ENCODE measurements at regions of chr1 and their contacts with region 1.

Region 1: GRCh38 chr1:42173155-42173933 is 8.8 kb upstream of the GUCA2A start:
- DNase-seq: peak; percentile 38 to 84 (median 66)
- ATAC-seq: peak; percentile 92
- H3K4me3 ChIP-seq: no peak overlapping the region
- H3K4me3 Mint-ChIP-seq: no peak overlapping the region
- H3K27ac ChIP-seq: no peak overlapping the region
- H3K27ac Mint-ChIP-seq: no peak overlapping the region
- H3K4me1 ChIP-seq: peaks cover 4% of the 10 kb centered on the region
- H3K4me1 Mint-ChIP-seq: no peaks in the 10 kb centered on the region
- H3K27me3 ChIP-seq: no peaks in the 10 kb centered on the region
- H3K27me3 Mint-ChIP-seq: no peaks in the 10 kb centered on the region
- CTCF ChIP-seq: peak; percentile 97

Region 2: DNA sequence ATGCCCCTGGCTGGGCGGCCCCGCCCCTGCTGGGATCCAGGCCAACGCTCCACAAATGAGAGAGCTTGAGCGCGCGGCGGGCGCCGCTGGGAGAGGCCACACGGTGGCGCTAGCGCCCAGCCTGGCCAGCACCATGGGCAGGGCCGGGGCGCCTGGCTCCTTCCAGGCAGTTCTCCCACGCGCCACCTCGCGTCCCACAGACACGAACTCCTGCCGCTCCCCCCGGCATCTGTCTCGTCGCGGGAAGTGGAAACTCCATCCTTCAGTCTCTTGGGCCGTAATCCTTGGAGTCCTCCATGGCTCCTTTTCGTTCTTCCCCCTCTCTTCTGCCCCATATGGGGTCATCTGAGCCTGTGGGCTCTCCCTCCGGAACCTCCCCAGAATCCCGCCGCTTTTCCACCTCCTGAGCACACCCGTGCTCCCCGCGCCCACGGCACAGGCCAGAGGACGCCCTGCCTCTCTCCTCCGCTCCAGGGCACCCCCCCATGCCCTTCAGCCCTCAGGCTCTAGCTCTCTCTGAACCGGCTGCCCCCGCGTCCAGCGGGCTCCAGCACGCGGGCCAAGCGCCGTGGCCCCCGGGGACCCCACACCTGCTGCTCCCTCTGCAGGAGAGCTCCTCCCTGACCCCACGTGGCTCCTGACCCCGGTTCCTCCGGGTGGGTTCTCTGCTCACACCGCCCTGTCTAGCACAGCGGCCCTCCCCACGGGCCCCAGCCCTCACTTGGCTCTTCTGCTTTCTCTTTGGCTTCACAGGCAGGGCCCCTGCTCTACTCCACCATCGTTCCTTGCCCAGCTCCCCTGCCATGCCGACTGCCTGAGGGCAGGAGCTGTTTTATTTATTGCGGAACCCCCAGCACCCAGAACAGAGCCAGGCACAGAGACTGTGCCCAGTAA is 656.9 kb before region 1 on chr1:
- CTCF ChIA-PET with region 1: interaction called, 4 read pairs
- POLR2A ChIA-PET with region 1: no interaction called
- intact Hi-C with region 1: loop called in 1 of 2 experiments (anchors 5 kb)
- DNase-seq: peak; percentile 23 to 69 (median 53)
- ATAC-seq: peak; percentile 71
- H3K4me3 ChIP-seq: no peak overlapping the region
- H3K4me3 Mint-ChIP-seq: peak overlapping the region; percentile 56
- H3K27ac ChIP-seq: no peak overlapping the region
- H3K27ac Mint-ChIP-seq: no peak overlapping the region
- H3K4me1 ChIP-seq: no peaks in the 10 kb centered on the region
- H3K4me1 Mint-ChIP-seq: peaks cover 3% of the 10 kb centered on the region
- H3K27me3 ChIP-seq: no peaks in the 10 kb centered on the region
- H3K27me3 Mint-ChIP-seq: no peaks in the 10 kb centered on the region
- CTCF ChIP-seq: peak; percentile 61

Region 3: DNA sequence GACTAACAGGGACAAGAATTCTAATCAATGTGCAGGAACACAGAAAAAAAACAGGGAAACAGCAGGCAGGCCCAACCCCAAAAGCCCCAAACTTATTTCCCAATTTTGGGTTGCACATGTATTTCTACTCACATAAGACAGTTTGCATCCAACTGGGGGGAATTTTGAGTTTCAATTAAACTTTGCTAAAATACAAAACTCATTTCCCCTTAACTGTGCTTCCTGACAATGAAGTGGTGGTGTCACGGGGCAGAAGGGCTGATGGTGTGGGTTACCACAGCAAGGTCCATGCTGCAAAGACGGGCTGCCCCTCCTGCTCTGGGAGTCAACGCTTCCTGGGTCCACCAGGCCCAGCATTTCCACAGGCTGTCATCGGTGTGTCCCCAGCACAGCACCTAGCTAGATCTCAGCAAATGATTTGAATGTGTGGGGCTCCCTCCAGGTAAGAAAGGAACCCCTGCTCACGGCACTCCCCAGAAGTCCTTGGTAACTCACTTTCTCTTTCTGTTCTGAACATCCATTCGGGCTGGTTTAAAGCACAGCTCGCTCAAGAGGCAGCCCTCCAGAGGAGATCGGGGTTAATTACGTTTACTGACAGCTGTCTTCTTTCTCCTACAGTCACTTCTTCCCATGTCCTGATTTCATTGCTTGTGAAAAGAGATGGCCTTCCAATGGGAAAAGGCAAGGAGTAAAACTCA is 282.0 kb before region 1 on chr1:
- CTCF ChIA-PET with region 1: interaction called, 4 read pairs
- POLR2A ChIA-PET with region 1: no interaction called
- intact Hi-C with region 1: loop called in 1 of 2 experiments (anchors 10 kb)
- DNase-seq: peak; percentile 22 to 89 (median 64)
- ATAC-seq: peak; percentile 98
- H3K4me3 ChIP-seq: peak overlapping the region; percentile 53 to 56
- H3K4me3 Mint-ChIP-seq: peak overlapping the region; percentile 81
- H3K27ac ChIP-seq: peak overlapping the region; percentile 58 to 74
- H3K27ac Mint-ChIP-seq: peak overlapping the region; percentile 93
- H3K4me1 ChIP-seq: peaks cover 28% of the 10 kb centered on the region
- H3K4me1 Mint-ChIP-seq: peaks cover 46% of the 10 kb centered on the region
- H3K27me3 ChIP-seq: no peaks in the 10 kb centered on the region
- H3K27me3 Mint-ChIP-seq: no peaks in the 10 kb centered on the region
- CTCF ChIP-seq: peak; percentile 60

Region 4: DNA sequence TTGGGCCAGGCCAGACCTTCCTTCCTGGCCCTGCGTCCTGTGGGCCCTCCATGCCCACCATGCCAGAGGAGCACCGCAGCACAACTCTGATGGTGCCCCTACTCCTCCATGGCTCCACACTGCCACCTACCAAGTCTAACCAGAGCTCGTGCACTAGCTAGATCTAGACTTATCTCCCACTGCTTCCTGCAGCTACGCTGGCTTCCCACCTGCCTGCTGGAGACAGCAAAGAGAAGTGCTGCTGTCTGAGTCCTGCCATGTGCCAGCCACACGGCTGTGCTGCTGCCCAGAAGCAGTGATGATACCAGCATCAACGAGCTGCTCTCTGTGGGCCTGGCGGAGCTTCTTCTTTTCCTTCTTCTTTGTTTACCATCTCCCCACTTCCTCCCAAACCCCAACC is 15.7 kb before region 1 on chr1:
- CTCF ChIA-PET with region 1: interaction called, 20 read pairs
- POLR2A ChIA-PET with region 1: no interaction called
- intact Hi-C with region 1: no loop called
- DNase-seq: peak in 1 of 9 experiments; percentile 37
- ATAC-seq: no peak
- H3K4me3 ChIP-seq: no peak overlapping the region
- H3K4me3 Mint-ChIP-seq: no peak overlapping the region
- H3K27ac ChIP-seq: no peak overlapping the region
- H3K27ac Mint-ChIP-seq: no peak overlapping the region
- H3K4me1 ChIP-seq: peaks cover 8% of the 10 kb centered on the region
- H3K4me1 Mint-ChIP-seq: peaks cover 7% of the 10 kb centered on the region
- H3K27me3 ChIP-seq: no peaks in the 10 kb centered on the region
- H3K27me3 Mint-ChIP-seq: peaks cover 5% of the 10 kb centered on the region
- CTCF ChIP-seq: no peak

Region 5: GRCh38 chr1:42456010-42456758 is 282.8 kb after region 1 on chr1 and contains the starts of genes PPCS and ZMYND12:
- CTCF ChIA-PET with region 1: no interaction called
- POLR2A ChIA-PET with region 1: no interaction called
- intact Hi-C with region 1: loop called in 1 of 2 experiments (anchors 10 kb)
- DNase-seq: peak; percentile 82 to 98 (median 91)
- ATAC-seq: peak; percentile 92
- H3K4me3 ChIP-seq: peak within 1 kb of the TSS; percentile 99
- H3K4me3 Mint-ChIP-seq: peak within 1 kb of the TSS; percentile 98
- H3K27ac ChIP-seq: peak within 1 kb of the TSS; percentile 99 to 100
- H3K27ac Mint-ChIP-seq: peak within 1 kb of the TSS; percentile 100
- H3K4me1 ChIP-seq: peaks cover 25% of the 10 kb centered on the region
- H3K4me1 Mint-ChIP-seq: peaks cover 37% of the 10 kb centered on the region
- H3K27me3 ChIP-seq: no peaks in the 10 kb centered on the region
- H3K27me3 Mint-ChIP-seq: no peaks in the 10 kb centered on the region
- CTCF ChIP-seq: peak; percentile 34
- total RNA-seq, gene PPCS: 38.0 to 38.1 TPM
- total RNA-seq, gene ZMYND12: 0.56 to 0.76 TPM

Measured in CD8-positive, alpha-beta T cell (primary cell).